Heart left ventricle (tissue), 16 donors: ENCODE measurements at regions of chr15 and their contacts with region 1.

Region 1: GRCh38 chr15:89177633-89178306 is 43.6 kb downstream of the RLBP1 start:
- DNase-seq: peak in 4 of 5 donors; percentile 53 to 77 (median 64)
- ATAC-seq: peak in 3 of 4 donors; percentile 21 to 59 (median 35)
- H3K4me3 ChIP-seq: no peak overlapping the region
- H3K27ac ChIP-seq: peak overlapping the region in 6 of 12 donors; percentile 17 to 61 (median 42)
- H3K4me1 ChIP-seq: peaks cover 0 to 45% (median 22%) of the 10 kb centered on the region in 12 donors
- H3K27me3 ChIP-seq: no peaks in the 10 kb centered on the region
- CTCF ChIP-seq: peak; percentile 63 to 91 (median 82)
- POLR2A ChIP-seq: no peak

Region 2: DNA sequence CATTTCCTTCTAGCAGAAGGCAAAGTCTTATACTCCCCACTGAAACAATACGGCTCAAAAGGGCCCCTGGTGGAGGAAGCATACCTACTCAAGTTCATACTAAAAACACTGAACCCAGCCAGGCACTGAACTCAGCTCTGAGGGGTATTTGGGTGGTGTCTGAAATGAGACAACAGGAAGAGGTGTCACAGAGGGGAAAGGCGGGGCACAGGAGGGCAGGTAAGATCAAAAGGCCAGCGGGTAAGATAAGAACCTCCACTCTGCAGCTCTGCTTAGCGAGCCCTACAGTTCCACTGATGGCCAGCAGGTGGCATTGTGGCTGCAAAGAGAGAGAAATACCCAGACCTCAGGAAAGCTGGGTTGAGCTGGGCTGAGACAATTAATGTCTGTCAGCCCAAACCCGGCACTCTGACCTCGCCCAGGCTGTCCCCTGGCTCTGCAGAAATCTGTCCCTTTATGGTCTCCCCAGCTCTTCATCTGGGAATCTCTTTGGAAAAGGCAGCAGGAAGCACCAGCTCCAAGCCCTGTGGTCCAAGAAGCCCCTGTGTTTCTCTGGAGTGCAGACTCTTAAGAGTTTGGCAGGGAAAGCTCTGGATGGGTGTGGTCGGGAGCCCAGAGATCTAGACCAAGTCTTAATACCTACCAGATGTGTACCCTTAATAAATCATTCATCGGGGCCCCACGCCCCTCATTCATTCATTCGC is 273.0 kb before region 1 on chr15:
- intact Hi-C with region 1: loop called (anchors 2 to 10 kb)
- DNase-seq: peak; percentile 75 to 90 (median 81)
- ATAC-seq: peak; percentile 48 to 73 (median 69)
- H3K4me3 ChIP-seq: no peak overlapping the region
- H3K27ac ChIP-seq: peak overlapping the region in 10 of 12 donors; percentile 22 to 68 (median 44)
- H3K4me1 ChIP-seq: peaks cover 3 to 77% (median 60%) of the 10 kb centered on the region in 12 donors
- H3K27me3 ChIP-seq: no peaks in the 10 kb centered on the region
- CTCF ChIP-seq: peak; percentile 97 to 100 (median 99)
- POLR2A ChIP-seq: peak in 1 of 2 donors; percentile 23

Region 3: DNA sequence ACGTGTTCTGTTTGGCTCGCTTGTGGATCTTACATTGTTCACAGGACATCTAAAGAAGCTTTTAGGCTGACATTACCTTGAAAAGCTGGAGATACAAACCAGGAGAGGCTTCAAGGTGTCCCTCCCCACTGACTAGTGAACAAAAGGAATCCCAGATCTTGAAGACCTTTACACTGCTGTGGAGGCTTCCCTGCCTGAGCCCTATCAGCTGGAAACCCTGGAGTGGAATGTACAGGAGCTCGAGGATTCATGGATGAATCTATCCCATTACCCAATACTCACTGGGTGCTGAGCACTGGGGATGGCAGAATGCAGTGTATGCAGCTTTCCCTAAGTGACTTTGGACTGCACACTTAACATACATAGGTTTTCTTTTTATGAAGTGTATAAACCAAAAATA is 182.3 kb before region 1 on chr15:
- intact Hi-C with region 1: no loop called
- DNase-seq: no peak
- ATAC-seq: no peak
- H3K4me3 ChIP-seq: no peak overlapping the region
- H3K27ac ChIP-seq: no peak overlapping the region
- H3K4me1 ChIP-seq: no peaks in the 10 kb centered on the region
- H3K27me3 ChIP-seq: no peaks in the 10 kb centered on the region
- CTCF ChIP-seq: no peak
- POLR2A ChIP-seq: no peak

Region 4: DNA sequence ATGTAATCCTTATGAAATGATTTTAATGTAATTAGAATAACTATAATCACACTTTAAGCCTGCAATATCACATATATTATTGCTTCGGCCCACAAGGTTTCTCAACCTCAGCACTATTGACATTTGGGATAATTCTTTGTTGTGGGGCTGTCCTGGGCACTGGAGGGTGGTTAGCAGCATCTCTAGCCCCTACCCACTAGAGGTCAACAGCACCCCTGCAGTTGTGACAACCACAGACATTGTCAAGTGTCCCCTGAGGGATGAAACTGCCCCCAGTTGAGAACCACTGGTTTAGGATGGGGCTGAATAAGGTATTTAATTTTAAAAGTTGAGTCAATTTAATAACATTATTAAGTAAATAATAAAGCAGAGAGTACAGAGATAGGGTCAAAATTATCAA is 95.9 kb before region 1 on chr15:
- intact Hi-C with region 1: loop called in 2 of 10 experiments (anchors 5 to 10 kb)
- DNase-seq: no peak
- ATAC-seq: peak in 1 of 4 donors; percentile 23
- H3K4me3 ChIP-seq: no peak overlapping the region
- H3K27ac ChIP-seq: no peak overlapping the region
- H3K4me1 ChIP-seq: peaks cover 0 to 11% (median under 1%) of the 10 kb centered on the region in 12 donors
- H3K27me3 ChIP-seq: no peaks in the 10 kb centered on the region
- CTCF ChIP-seq: no peak
- POLR2A ChIP-seq: no peak

Region 5: GRCh38 chr15:89129123-89129815 is 48.5 kb before region 1 on chr15:
- intact Hi-C with region 1: loop called in 1 of 10 experiments (anchors 2 kb)
- DNase-seq: peak in 1 of 5 donors; percentile 66
- ATAC-seq: no peak
- H3K4me3 ChIP-seq: no peak overlapping the region
- H3K27ac ChIP-seq: peak overlapping the region in 8 of 12 donors; percentile 6 to 88 (median 44)
- H3K4me1 ChIP-seq: peaks cover 0 to 83% (median 55%) of the 10 kb centered on the region in 12 donors
- H3K27me3 ChIP-seq: no peaks in the 10 kb centered on the region
- CTCF ChIP-seq: peak; percentile 25 to 70 (median 59)
- POLR2A ChIP-seq: no peak